ENCODE measurements at regions of chr20 and their contacts with region 1.

Region 1: DNA sequence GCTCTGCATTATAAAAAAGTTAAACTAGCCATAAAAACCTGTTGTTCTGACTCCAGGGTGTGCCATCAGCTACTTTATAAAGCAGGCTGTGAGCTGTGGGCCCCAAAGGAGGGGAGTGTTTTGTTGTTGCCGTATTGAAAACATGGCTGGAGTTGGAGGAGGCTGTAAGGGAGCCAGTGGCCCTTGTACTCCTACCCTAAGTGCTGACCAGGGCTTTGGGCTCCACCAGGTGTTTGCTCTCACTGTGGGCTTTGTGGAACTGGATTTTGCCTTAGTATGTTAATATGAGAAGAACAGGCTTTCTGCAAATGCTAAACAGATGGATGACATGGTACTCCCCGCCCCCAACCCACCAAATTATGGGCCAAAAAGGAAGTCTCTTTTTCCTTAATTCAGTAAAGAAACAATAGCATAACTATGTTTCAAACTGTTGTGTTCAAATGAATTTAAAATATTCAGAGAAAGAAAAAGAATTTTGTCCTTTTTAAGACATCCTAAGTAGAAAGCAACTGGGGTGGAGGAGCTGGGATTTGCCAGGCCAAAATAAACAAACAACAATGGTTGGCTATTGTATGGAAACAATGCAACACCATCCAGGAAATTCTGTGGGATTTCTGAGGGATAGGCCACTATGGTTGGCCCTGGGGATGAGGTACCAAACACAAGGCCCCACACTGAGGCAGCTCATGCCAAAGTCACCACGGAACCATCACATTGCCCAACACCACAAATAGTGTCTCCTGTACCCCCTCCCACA is 63.3 kb downstream of the PLCG1 start:
- DNase-seq: peak; percentile 87
- H3K4me3 ChIP-seq: no peak overlapping the region
- H3K27ac ChIP-seq: peak overlapping the region; percentile 63
- H3K4me1 ChIP-seq: peaks cover 18% of the 10 kb centered on the region
- H3K27me3 ChIP-seq: no peaks in the 10 kb centered on the region
- CTCF ChIP-seq: no peak
- POLR2A ChIP-seq: no peak

Region 2: DNA sequence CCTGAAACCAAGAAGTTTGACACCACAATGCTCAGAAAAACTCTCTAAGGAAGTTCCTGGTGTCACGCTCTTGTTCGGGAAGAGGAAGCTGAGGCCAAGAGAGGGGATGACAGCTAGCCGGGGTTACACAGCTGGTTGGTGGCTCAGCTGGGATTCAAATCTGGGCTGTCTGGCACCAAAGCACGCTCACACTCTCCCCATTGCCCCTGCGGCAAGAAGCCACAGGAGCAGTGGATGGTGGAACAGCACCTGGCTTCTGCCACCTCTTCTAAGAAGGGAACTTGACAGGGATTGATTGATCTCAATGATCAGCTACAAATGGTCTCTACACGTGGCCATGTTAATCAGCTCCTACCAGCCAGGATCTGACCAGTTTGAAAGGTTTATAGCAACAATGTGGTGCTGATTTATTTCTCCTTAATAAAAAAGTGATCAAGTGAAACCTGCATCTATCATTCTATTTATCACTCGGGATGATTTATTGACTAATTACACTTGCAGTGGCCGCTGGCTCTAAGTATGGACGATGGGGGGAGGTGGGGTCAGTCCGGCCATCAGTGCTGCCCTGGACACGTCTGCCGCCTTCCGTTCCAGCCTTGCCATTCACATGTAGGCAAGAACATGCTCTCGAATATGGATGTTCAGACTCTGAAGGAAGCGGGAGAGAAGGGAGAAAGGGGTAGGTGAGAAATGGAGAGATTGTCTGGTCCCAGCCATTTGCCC is 243.9 kb before region 1 on chr20:
- CTCF ChIA-PET with region 1: no interaction called
- POLR2A ChIA-PET with region 1: no interaction called
- dilution Hi-C with region 1: no loop called
- intact Hi-C with region 1: no loop called
- DNase-seq: no peak
- H3K4me3 ChIP-seq: no peak overlapping the region
- H3K27ac ChIP-seq: no peak overlapping the region
- H3K4me1 ChIP-seq: no peaks in the 10 kb centered on the region
- H3K27me3 ChIP-seq: no peaks in the 10 kb centered on the region
- CTCF ChIP-seq: no peak
- POLR2A ChIP-seq: no peak

Region 3: GRCh38 chr20:41222296-41222695 is 21.7 kb after region 1 on chr20:
- CTCF ChIA-PET with region 1: interaction called, 11 read pairs
- POLR2A ChIA-PET with region 1: no interaction called
- dilution Hi-C with region 1: no loop called
- intact Hi-C with region 1: no loop called
- DNase-seq: no peak
- H3K4me3 ChIP-seq: no peak overlapping the region
- H3K27ac ChIP-seq: no peak overlapping the region
- H3K4me1 ChIP-seq: no peaks in the 10 kb centered on the region
- H3K27me3 ChIP-seq: no peaks in the 10 kb centered on the region
- CTCF ChIP-seq: no peak
- POLR2A ChIP-seq: no peak

Measured in endothelial cell of umbilical vein (primary cell).